ENCODE measurements at regions of chr4 and their contacts with region 1.

Region 1: DNA sequence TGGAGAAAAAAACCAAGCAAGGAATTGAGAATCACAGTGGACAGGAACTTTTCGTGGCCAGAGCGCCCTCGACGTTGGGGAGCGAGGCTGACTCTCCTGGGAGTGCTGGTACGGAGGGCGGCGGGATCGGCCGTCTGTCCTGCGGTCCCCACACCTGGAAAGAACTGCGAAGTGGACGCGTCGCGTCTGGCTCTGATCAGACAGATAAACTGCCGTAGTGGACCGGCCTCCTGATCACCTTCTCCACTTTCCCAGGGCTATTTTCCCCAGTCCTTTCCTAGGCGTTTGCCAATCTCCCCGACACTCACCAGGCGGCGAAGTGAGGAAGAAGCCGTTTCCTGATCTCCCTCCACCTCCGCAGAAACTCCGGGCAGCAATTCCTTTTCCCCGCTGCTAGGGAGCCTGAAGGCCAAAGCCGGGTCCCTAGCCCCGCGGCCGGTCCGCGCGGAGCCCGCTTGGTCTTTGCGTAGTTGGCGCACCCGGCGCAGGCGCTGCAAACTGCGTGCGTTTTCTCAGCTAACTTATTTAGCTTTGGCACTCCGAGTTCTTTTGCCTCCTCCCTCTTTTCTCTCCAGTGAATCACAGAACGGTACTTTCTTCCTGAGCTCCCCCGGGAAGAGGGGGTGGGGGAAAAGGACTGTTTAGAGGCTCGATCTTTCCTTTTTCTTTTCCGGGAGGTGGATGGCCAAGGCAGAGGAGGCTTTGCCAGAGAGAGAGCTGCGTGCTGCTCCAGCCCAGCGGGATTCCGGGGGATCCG is at the start of gene ARSJ:
- DNase-seq: peak; percentile 82
- H3K4me3 ChIP-seq: peak within 1 kb of the TSS; percentile 92 to 98 (median 97)
- H3K27ac ChIP-seq: peak within 1 kb of the TSS; percentile 92
- H3K4me1 ChIP-seq: peaks cover 12% of the 10 kb centered on the region
- H3K27me3 ChIP-seq: no peaks in the 10 kb centered on the region
- CTCF ChIP-seq: peak in 1 of 2 donors; percentile 3
- POLR2A ChIP-seq: peak; percentile 86
- total RNA-seq, gene ARSJ: 44.0 and 50.0 TPM in 2 replicates

Region 2: GRCh38 chr4:113633467-113633866 is 345.9 kb before region 1 on chr4:
- CTCF ChIA-PET with region 1: no interaction called
- POLR2A ChIA-PET with region 1: no interaction called
- dilution Hi-C with region 1: no loop called
- intact Hi-C with region 1: no loop called
- DNase-seq: no peak
- H3K4me3 ChIP-seq: no peak overlapping the region
- H3K27ac ChIP-seq: no peak overlapping the region
- H3K4me1 ChIP-seq: peaks cover 3% of the 10 kb centered on the region
- H3K27me3 ChIP-seq: no peaks in the 10 kb centered on the region
- CTCF ChIP-seq: no peak
- POLR2A ChIP-seq: no peak

Region 3: GRCh38 chr4:113958766-113959538 is 20.4 kb before region 1 on chr4:
- CTCF ChIA-PET with region 1: interaction called, 10 read pairs
- POLR2A ChIA-PET with region 1: interaction called, 16 read pairs
- dilution Hi-C with region 1: no loop called
- intact Hi-C with region 1: loop called (anchors 1 kb)
- DNase-seq: peak; percentile 95
- H3K4me3 ChIP-seq: peak overlapping the region in 2 of 3 experiments; percentile 10 to 83
- H3K27ac ChIP-seq: peak overlapping the region; percentile 89
- H3K4me1 ChIP-seq: peaks cover 69% of the 10 kb centered on the region
- H3K27me3 ChIP-seq: no peaks in the 10 kb centered on the region
- CTCF ChIP-seq: no peak
- POLR2A ChIP-seq: peak; percentile 70

Region 4: DNA sequence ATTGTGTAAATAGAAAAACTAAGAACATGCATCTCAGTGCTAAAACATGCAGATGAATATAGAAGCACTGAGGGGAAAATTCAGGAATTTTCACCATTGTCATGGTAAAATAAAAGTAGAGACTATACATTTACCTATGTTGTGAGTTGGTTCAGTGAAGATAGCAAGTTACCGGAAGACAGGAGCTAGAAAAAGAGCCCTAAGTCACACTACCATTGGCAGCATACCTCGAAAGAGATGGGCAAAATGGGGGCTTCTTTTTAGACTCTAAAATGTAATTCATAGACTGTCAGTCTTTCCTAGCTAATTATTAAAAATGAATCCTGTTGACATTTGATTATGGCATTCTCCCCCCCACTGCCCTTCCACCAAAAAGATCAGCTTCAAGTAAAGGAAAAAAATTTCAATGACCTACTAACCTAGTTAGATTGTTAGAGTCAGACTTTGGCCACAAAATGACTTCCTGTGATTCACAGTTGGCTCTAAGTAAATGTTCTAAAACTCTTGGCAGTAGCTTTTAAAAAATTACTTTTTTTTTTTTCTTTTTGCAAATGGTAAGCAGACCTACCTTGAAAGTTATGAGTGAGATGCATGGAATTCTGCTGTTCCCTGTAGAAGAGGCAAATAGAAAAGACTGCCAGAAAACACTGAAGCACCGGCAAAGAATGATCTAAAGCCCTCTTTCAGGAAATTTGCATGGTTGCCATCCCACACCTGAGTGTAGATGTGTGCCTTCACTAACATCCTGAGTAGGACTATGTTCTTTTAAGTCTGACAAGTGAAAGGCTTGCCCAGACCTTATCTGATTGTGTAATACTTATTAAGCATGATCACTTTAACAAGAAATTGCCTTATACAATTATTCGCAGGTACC is 26.5 kb after region 1 on chr4:
- CTCF ChIA-PET with region 1: interaction called, 4 read pairs
- POLR2A ChIA-PET with region 1: interaction called, 4 read pairs
- dilution Hi-C with region 1: no loop called
- intact Hi-C with region 1: loop called (anchors 1 kb)
- DNase-seq: peak; percentile 76
- H3K4me3 ChIP-seq: no peak overlapping the region
- H3K27ac ChIP-seq: no peak overlapping the region
- H3K4me1 ChIP-seq: peaks cover 15% of the 10 kb centered on the region
- H3K27me3 ChIP-seq: no peaks in the 10 kb centered on the region
- CTCF ChIP-seq: no peak
- POLR2A ChIP-seq: no peak

Region 5: GRCh38 chr4:114077610-114078009 is 98.3 kb after region 1 on chr4:
- CTCF ChIA-PET with region 1: interaction called, 10 read pairs
- POLR2A ChIA-PET with region 1: interaction called, 3 read pairs
- dilution Hi-C with region 1: no loop called
- intact Hi-C with region 1: no loop called
- DNase-seq: peak; percentile 92
- H3K4me3 ChIP-seq: no peak overlapping the region
- H3K27ac ChIP-seq: peak overlapping the region; percentile 58
- H3K4me1 ChIP-seq: peaks cover 13% of the 10 kb centered on the region
- H3K27me3 ChIP-seq: no peaks in the 10 kb centered on the region
- CTCF ChIP-seq: no peak
- POLR2A ChIP-seq: no peak

Region 6: GRCh38 chr4:114180481-114180880 is 201.2 kb after region 1 on chr4:
- CTCF ChIA-PET with region 1: interaction called, 13 read pairs
- POLR2A ChIA-PET with region 1: no interaction called
- dilution Hi-C with region 1: no loop called
- intact Hi-C with region 1: loop called (anchors 1 kb)
- DNase-seq: peak; percentile 87
- H3K4me3 ChIP-seq: no peak overlapping the region
- H3K27ac ChIP-seq: no peak overlapping the region
- H3K4me1 ChIP-seq: no peaks in the 10 kb centered on the region
- H3K27me3 ChIP-seq: no peaks in the 10 kb centered on the region
- CTCF ChIP-seq: peak; percentile 69 to 79
- POLR2A ChIP-seq: no peak

Region 7: GRCh38 chr4:114193624-114194399 is 214.5 kb after region 1 on chr4:
- CTCF ChIA-PET with region 1: no interaction called
- POLR2A ChIA-PET with region 1: no interaction called
- dilution Hi-C with region 1: no loop called
- intact Hi-C with region 1: no loop called
- DNase-seq: no peak
- H3K4me3 ChIP-seq: no peak overlapping the region
- H3K27ac ChIP-seq: no peak overlapping the region
- H3K4me1 ChIP-seq: no peaks in the 10 kb centered on the region
- H3K27me3 ChIP-seq: no peaks in the 10 kb centered on the region
- CTCF ChIP-seq: no peak
- POLR2A ChIP-seq: no peak

Region 8: DNA sequence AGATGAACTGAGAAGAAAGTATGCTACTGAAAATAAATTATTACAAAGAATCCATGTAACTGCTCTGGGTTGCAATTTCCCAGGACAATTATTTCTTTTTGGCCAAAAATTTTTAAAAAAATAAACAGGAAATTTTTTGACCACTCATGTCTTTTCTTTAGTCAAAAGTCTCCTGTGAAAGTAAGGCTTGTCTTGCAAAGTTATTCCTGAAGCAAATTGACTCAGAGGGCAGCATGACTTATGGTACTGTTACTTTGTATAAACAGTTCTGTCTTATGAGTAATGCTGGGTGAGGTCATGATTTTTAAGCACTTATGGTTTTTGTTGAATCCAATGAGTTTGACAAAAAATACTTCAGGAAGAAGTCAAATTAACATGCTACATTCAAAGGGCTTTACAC is 292.9 kb after region 1 on chr4:
- CTCF ChIA-PET with region 1: interaction called, 3 read pairs
- POLR2A ChIA-PET with region 1: no interaction called
- dilution Hi-C with region 1: no loop called
- intact Hi-C with region 1: loop called (anchors 10 kb)
- DNase-seq: peak; percentile 87
- H3K4me3 ChIP-seq: no peak overlapping the region
- H3K27ac ChIP-seq: peak overlapping the region; percentile 55
- H3K4me1 ChIP-seq: peaks cover 23% of the 10 kb centered on the region
- H3K27me3 ChIP-seq: no peaks in the 10 kb centered on the region
- CTCF ChIP-seq: no peak
- POLR2A ChIP-seq: no peak

Region 9: DNA sequence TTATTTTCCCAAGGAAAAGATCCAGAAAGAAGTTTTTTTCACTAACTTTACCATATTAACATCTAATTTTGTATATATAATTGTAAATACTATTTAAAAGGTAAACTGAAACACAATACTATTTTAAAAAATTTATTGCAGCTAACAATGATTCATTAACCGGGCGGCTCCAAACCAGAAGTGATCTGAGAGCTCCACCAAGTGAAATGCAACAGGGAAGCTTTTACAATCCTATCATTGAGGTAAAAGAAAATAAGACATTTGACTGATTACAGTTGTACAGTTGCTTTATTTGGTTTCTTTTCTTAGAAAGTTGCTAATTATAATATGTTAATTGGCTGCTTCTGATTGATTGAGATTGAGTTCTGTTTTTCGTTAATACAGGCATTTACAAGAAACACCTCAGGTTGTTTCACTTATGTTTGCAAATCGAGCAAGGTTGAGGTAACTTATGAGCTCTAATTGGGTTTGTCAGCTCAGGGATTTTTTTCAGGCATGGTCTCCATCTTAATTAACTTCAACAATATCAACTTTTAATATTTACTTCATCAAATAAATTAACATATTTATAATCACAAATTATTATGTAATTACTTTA is 399.1 kb after region 1 on chr4:
- CTCF ChIA-PET with region 1: interaction called, 12 read pairs
- POLR2A ChIA-PET with region 1: no interaction called
- dilution Hi-C with region 1: no loop called
- intact Hi-C with region 1: no loop called
- DNase-seq: peak; percentile 37
- H3K4me3 ChIP-seq: no peak overlapping the region
- H3K27ac ChIP-seq: no peak overlapping the region
- H3K4me1 ChIP-seq: no peaks in the 10 kb centered on the region
- H3K27me3 ChIP-seq: peaks cover 0 to 2% of the 10 kb centered on the region in 2 experiments
- CTCF ChIP-seq: peak in 1 of 2 donors; percentile 21
- POLR2A ChIP-seq: no peak